ENCODE measurements at regions of chr11 and their contacts with region 1.

Region 1: DNA sequence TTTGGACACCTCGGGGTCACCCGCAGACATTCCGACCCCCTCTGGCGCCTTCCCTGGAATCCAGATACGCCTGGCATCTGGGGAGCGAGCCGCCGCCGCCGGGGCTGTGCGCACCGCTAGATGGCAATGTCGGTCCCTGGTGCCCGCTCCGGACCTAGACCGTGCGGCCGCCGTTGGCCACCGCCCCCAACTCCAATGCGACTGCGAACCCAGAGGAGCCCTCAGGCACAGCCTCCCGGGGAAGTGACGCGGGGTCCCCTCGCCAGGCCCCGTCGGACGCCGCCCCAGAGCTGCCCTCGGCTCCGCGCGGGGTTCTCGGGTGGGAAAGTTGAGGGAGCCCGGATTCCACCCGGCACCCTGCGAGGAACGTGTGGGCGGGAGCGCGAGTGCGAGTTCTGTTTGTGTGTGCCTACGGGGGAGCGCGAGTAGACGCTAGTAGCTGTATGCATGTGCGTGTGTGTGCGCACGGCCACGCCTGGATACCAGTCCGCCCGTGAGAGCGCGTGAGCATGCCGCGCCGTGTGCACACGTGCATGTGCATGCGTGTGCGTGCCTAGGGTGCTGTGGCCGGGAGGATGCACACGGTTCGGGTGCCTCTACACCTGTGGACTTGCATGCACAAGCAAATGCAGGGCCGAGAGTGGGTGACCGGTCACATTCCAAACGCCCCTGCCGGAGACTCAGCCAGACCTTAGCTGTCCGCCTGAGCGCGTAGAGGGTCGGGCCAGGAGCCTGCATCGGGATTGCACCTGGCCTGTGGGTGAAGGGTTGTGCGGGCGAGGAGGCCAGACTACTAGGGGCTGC is 1.9 kb downstream of the CHRM4 start:
- DNase-seq: no peak

Region 2: GRCh38 chr11:46537537-46538295 is 148.1 kb after region 1 on chr11:
- intact Hi-C with region 1: loop called (anchors 2 kb)
- DNase-seq: no peak